Mammary epithelial cell (primary cell): ENCODE measurements at regions of chr1 and their contacts with region 1.

Region 1: GRCh38 chr1:227318003-227318852 is at the start of gene CDC42BPA:
- DNase-seq: peak; percentile 85
- H3K4me3 ChIP-seq: peak within 1 kb of the TSS; percentile 51 to 100 (median 94)
- H3K27ac ChIP-seq: peak within 1 kb of the TSS; percentile 85
- H3K4me1 ChIP-seq: peaks cover 4% of the 10 kb centered on the region
- H3K27me3 ChIP-seq: no peaks in the 10 kb centered on the region
- CTCF ChIP-seq: no peak
- total RNA-seq, gene CDC42BPA: 50.8 to 56.1 TPM

Region 2: DNA sequence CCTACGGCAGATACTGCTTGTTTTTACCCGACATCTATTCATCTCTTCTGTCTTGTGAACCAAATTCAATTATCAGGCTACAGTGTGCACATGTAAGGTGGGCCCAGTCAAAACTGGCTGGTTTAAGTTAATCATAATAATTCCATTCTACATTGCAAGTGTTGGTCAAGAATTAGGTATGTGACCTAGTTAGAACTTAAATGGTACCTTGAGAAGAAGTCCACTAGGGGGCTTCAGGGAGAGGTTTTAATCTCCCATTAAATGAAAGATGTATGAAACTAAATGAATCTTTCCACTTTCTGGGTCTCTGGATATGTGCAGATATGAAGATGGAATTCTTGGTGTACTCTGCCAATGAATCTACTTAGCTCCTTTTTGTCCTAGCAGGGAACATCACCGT is 187.0 kb before region 1 on chr1:
- CTCF ChIA-PET with region 1: no interaction called
- dilution Hi-C with region 1: no loop called
- in situ Hi-C with region 1: no loop called
- intact Hi-C with region 1: loop called (anchors 5 kb)
- DNase-seq: peak; percentile 6
- H3K4me3 ChIP-seq: no peak overlapping the region
- H3K27ac ChIP-seq: no peak overlapping the region
- H3K4me1 ChIP-seq: no peaks in the 10 kb centered on the region
- H3K27me3 ChIP-seq: no peaks in the 10 kb centered on the region
- CTCF ChIP-seq: peak; percentile 45 to 47

Region 3: GRCh38 chr1:227234998-227235405 is 83.2 kb before region 1 on chr1:
- CTCF ChIA-PET with region 1: no interaction called
- dilution Hi-C with region 1: no loop called
- in situ Hi-C with region 1: no loop called
- intact Hi-C with region 1: loop called (anchors 1 kb)
- DNase-seq: peak; percentile 51
- H3K4me3 ChIP-seq: no peak overlapping the region
- H3K27ac ChIP-seq: no peak overlapping the region
- H3K4me1 ChIP-seq: no peaks in the 10 kb centered on the region
- H3K27me3 ChIP-seq: no peaks in the 10 kb centered on the region
- CTCF ChIP-seq: peak; percentile 32 to 63

Region 4: DNA sequence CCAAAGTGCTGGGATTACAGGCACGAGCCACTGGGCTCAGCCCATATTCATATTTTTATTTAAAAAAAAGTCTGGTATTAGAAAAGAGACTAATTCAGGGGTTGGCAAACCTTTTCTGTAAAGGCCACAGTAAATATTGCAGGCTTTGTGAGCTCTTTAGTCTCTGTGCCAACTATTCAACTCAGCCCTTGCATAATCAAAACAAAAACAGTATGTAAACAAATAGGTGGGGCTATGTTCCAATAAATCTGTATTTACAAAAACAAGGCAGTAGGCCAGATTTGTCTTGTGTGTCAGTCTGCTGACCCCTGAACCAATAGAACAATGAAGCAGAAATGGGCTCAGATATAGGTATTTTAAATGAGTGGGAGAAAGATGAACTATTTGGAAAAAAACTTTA is 49.3 kb before region 1 on chr1:
- CTCF ChIA-PET with region 1: no interaction called
- dilution Hi-C with region 1: no loop called
- in situ Hi-C with region 1: no loop called
- intact Hi-C with region 1: no loop called
- DNase-seq: no peak
- H3K4me3 ChIP-seq: no peak overlapping the region
- H3K27ac ChIP-seq: no peak overlapping the region
- H3K4me1 ChIP-seq: no peaks in the 10 kb centered on the region
- H3K27me3 ChIP-seq: no peaks in the 10 kb centered on the region
- CTCF ChIP-seq: no peak

Region 5: DNA sequence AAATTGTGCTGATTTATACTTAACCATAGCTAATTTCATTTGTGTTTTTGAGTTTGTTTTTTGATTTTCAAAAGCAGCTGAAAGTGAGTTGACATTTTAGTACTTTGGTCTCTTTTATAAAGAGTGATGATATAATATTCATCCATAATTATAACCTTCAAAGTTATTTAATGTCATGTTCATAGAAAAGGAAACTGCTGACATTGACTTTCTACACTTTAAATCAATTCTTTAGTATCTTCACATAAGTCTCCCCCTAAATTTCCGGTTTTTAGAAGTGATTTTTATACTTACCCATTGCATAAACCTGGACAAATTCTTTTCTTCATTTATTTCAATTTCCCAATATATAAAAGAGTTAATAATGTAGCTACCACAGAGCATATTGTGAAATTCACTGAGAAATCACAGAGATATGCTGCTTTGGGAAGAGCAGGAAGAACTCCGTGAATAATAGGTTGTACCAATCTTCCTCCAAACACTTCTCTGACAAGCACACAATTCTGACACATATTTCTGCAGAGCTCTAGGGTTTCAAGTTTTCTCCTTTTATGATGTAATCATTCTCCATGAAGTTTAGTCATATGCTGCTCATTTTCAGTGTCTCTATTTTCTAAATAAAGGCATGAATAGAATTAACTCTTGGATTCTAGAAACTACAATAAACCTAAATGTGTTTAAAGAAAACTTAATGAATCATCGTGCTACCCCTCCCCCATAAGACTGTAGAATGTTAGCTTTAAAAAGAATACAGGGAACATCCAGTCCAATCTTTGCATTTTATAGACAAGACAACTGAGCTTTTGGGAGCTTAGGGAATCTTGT is 25.7 kb after region 1 on chr1:
- CTCF ChIA-PET with region 1: no interaction called
- dilution Hi-C with region 1: no loop called
- in situ Hi-C with region 1: no loop called
- intact Hi-C with region 1: loop called (anchors 1 kb)
- DNase-seq: peak; percentile 89
- H3K4me3 ChIP-seq: no peak overlapping the region
- H3K27ac ChIP-seq: peak overlapping the region; percentile 13
- H3K4me1 ChIP-seq: peaks cover 9% of the 10 kb centered on the region
- H3K27me3 ChIP-seq: no peaks in the 10 kb centered on the region
- CTCF ChIP-seq: no peak

Region 6: GRCh38 chr1:227357171-227357880 is 39.1 kb after region 1 on chr1:
- CTCF ChIA-PET with region 1: interaction called, 3 read pairs
- dilution Hi-C with region 1: no loop called
- in situ Hi-C with region 1: no loop called
- intact Hi-C with region 1: loop called (anchors 1 kb)
- DNase-seq: peak; percentile 70
- H3K4me3 ChIP-seq: no peak overlapping the region
- H3K27ac ChIP-seq: peak overlapping the region; percentile 77
- H3K4me1 ChIP-seq: peaks cover 19% of the 10 kb centered on the region
- H3K27me3 ChIP-seq: no peaks in the 10 kb centered on the region
- CTCF ChIP-seq: no peak

Region 7: GRCh38 chr1:227416156-227416830 is 98.1 kb after region 1 on chr1:
- CTCF ChIA-PET with region 1: no interaction called
- dilution Hi-C with region 1: no loop called
- in situ Hi-C with region 1: no loop called
- intact Hi-C with region 1: loop called (anchors 5 kb)
- DNase-seq: peak; percentile 23
- H3K4me3 ChIP-seq: no peak overlapping the region
- H3K27ac ChIP-seq: no peak overlapping the region
- H3K4me1 ChIP-seq: no peaks in the 10 kb centered on the region
- H3K27me3 ChIP-seq: no peaks in the 10 kb centered on the region
- CTCF ChIP-seq: no peak